B cell (primary cell): ENCODE measurements at regions of chr1 and their contacts with region 1.

Region 1: DNA sequence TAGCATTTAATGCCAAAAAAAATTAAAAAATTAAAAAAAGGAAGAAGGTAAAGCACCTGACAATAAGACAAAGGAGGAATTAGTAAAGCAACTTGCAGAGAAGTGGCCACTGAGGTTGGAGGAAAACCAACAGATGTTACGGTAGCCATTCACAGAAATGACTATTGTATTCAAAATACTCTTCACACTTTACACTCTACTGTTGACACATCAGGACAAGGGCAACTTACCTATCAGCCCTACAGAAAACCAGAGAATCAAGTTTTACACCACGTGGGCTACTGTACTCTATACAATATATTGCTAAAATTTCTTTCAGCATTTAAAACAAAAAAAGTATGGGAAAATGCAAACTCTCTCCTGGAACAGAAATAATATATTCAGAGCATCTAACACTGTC is 70.0 kb downstream of the EIF4G3 start:
- DNase-seq: no peak
- ATAC-seq: no peak
- H3K4me3 ChIP-seq: no peak overlapping the region
- H3K4me3 Mint-ChIP-seq: no peak overlapping the region
- H3K27ac ChIP-seq: no peak overlapping the region
- H3K27ac Mint-ChIP-seq: no peak overlapping the region
- H3K4me1 ChIP-seq: no peaks in the 10 kb centered on the region
- H3K4me1 Mint-ChIP-seq: no peaks in the 10 kb centered on the region
- H3K27me3 ChIP-seq: no peaks in the 10 kb centered on the region
- H3K27me3 Mint-ChIP-seq: no peaks in the 10 kb centered on the region
- CTCF ChIP-seq: no peak

Region 2: DNA sequence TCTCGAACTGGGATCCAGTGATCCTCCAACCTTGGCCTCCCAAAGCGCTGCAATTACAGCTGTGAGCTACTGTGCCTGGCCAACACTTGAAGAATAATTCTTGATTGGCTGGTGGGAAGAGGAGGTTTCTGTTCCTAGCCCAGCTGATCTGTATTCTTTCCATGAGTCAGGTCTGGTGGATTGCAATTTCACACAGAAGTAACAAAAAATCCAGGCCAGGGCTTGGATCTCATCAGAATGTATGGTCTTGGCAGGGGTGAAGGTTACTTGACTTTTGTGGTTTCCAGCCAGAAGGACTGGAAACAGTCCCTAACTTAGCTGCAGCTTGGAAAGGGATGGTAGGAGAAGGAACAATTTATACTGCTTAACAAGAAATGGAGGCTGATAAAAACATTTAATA is 314.5 kb before region 1 on chr1:
- CTCF ChIA-PET with region 1: no interaction called
- POLR2A ChIA-PET with region 1: no interaction called
- intact Hi-C with region 1: no loop called
- DNase-seq: no peak
- ATAC-seq: no peak
- H3K4me3 ChIP-seq: no peak overlapping the region
- H3K4me3 Mint-ChIP-seq: no peak overlapping the region
- H3K27ac ChIP-seq: no peak overlapping the region
- H3K27ac Mint-ChIP-seq: no peak overlapping the region
- H3K4me1 ChIP-seq: peaks cover 7 to 8% of the 10 kb centered on the region in 2 donors
- H3K4me1 Mint-ChIP-seq: peaks cover 10% of the 10 kb centered on the region
- H3K27me3 ChIP-seq: no peaks in the 10 kb centered on the region
- H3K27me3 Mint-ChIP-seq: no peaks in the 10 kb centered on the region
- CTCF ChIP-seq: no peak

Region 3: DNA sequence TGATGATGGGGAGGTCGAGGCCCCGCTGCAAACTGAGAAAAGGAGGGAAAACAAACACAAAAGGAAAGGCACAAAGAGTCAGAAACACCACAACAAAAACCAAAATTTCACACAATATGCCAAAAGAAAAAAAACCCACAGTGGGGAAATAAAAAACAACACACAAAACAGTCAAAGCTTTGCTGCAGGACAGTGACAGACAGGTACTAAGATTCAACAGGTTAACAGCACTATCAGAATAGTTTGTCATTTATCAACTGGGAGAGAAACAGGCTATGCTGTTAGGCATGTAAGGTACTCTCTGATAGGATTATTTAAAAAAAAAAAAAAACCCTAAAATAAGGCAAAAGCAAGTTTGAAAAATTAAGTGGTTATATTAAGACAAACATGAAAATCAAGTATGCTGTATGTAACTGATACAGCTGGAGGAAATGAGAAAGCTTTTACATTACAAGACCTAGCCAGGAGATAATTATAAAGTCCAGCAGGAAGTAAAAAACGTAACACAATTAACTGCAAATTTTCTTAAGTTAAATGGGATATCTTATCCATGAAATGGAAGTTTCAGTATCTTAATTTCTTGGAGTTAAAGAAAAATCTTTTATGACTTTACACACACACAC is 109.0 kb before region 1 on chr1:
- CTCF ChIA-PET with region 1: no interaction called
- POLR2A ChIA-PET with region 1: no interaction called
- intact Hi-C with region 1: no loop called
- DNase-seq: no peak
- ATAC-seq: no peak
- H3K4me3 ChIP-seq: no peak overlapping the region
- H3K4me3 Mint-ChIP-seq: no peak overlapping the region
- H3K27ac ChIP-seq: no peak overlapping the region
- H3K27ac Mint-ChIP-seq: no peak overlapping the region
- H3K4me1 ChIP-seq: peaks cover 0 to 5% of the 10 kb centered on the region in 2 donors
- H3K4me1 Mint-ChIP-seq: peaks cover 11% of the 10 kb centered on the region
- H3K27me3 ChIP-seq: no peaks in the 10 kb centered on the region
- H3K27me3 Mint-ChIP-seq: no peaks in the 10 kb centered on the region
- CTCF ChIP-seq: no peak

Region 4: GRCh38 chr1:21034725-21035628 is 71.7 kb before region 1 on chr1:
- CTCF ChIA-PET with region 1: no interaction called
- POLR2A ChIA-PET with region 1: no interaction called
- intact Hi-C with region 1: no loop called
- DNase-seq: no peak
- ATAC-seq: no peak
- H3K4me3 ChIP-seq: no peak overlapping the region
- H3K4me3 Mint-ChIP-seq: no peak overlapping the region
- H3K27ac ChIP-seq: no peak overlapping the region
- H3K27ac Mint-ChIP-seq: no peak overlapping the region
- H3K4me1 ChIP-seq: no peaks in the 10 kb centered on the region
- H3K4me1 Mint-ChIP-seq: peaks cover 9% of the 10 kb centered on the region
- H3K27me3 ChIP-seq: no peaks in the 10 kb centered on the region
- H3K27me3 Mint-ChIP-seq: no peaks in the 10 kb centered on the region
- CTCF ChIP-seq: no peak

Region 5: DNA sequence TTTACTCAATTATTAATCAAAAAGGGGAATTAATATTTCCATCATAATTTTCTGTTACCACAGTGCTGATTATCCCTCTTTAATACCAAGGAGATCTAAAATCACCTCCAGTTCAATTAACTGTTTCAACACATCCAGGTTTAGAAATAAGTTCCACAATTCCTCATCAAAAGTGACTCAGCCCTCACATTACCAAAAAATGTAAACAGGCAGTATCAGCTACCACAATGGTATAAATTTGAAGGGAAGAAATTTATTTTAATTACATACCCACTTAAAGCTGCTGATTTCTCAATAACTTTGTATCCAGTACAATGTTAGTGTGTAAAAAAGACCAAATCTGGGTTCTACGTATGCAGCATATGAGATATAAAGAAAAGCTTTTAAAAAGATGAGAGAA is 18.1 kb after region 1 on chr1:
- CTCF ChIA-PET with region 1: no interaction called
- POLR2A ChIA-PET with region 1: interaction called, 11 read pairs
- intact Hi-C with region 1: no loop called
- DNase-seq: no peak
- ATAC-seq: no peak
- H3K4me3 ChIP-seq: no peak overlapping the region
- H3K4me3 Mint-ChIP-seq: no peak overlapping the region
- H3K27ac ChIP-seq: no peak overlapping the region
- H3K27ac Mint-ChIP-seq: no peak overlapping the region
- H3K4me1 ChIP-seq: peaks cover 3 to 6% of the 10 kb centered on the region in 2 donors
- H3K4me1 Mint-ChIP-seq: peaks cover 14% of the 10 kb centered on the region
- H3K27me3 ChIP-seq: no peaks in the 10 kb centered on the region
- H3K27me3 Mint-ChIP-seq: no peaks in the 10 kb centered on the region
- CTCF ChIP-seq: no peak